ENCODE measurements at regions of chr17 and their contacts with region 1.

Region 1: GRCh38 chr17:42459256-42459800 is 650 bp downstream of the ATP6V0A1 start:
- DNase-seq: peak; percentile 56 to 85 (median 60)
- ATAC-seq: peak; percentile 74
- H3K4me3 ChIP-seq: peak overlapping the region; percentile 76
- H3K27ac ChIP-seq: peak overlapping the region; percentile 77
- H3K4me1 ChIP-seq: peaks cover 22 to 26% of the 10 kb centered on the region in 2 experiments
- H3K27me3 ChIP-seq: no peaks in the 10 kb centered on the region
- CTCF ChIP-seq: peak; percentile 61 to 69 (median 65)
- EP300 ChIP-seq: no peak; the same call in 1 of the 2 replicates
- POLR2A ChIP-seq: no peak
- RAD21 ChIP-seq: peak in 1 of 2 experiments; percentile 30; a peak in 1 of 4 replicates

Region 2: GRCh38 chr17:42422958-42423712 is 36.2 kb before region 1 on chr17 and contains the start of gene CAVIN1:
- CTCF ChIA-PET with region 1: no interaction called
- POLR2A ChIA-PET with region 1: interaction called, 3 read pairs
- in situ Hi-C with region 1: no loop called
- intact Hi-C with region 1: loop called (anchors 2 kb)
- DNase-seq: peak; percentile 93 to 99 (median 98)
- ATAC-seq: peak; percentile 88
- H3K4me3 ChIP-seq: peak within 1 kb of the TSS; percentile 64
- H3K27ac ChIP-seq: peak within 1 kb of the TSS; percentile 71
- H3K4me1 ChIP-seq: peaks cover 21 to 33% of the 10 kb centered on the region in 2 experiments; a peak in 4 of 5 replicates
- H3K27me3 ChIP-seq: no peaks in the 10 kb centered on the region
- CTCF ChIP-seq: no peak
- EP300 ChIP-seq: no peak
- POLR2A ChIP-seq: peak; percentile 88
- RAD21 ChIP-seq: no peak
- polyA plus RNA-seq, gene CAVIN1: 6.8 to 8.6 TPM

Region 3: DNA sequence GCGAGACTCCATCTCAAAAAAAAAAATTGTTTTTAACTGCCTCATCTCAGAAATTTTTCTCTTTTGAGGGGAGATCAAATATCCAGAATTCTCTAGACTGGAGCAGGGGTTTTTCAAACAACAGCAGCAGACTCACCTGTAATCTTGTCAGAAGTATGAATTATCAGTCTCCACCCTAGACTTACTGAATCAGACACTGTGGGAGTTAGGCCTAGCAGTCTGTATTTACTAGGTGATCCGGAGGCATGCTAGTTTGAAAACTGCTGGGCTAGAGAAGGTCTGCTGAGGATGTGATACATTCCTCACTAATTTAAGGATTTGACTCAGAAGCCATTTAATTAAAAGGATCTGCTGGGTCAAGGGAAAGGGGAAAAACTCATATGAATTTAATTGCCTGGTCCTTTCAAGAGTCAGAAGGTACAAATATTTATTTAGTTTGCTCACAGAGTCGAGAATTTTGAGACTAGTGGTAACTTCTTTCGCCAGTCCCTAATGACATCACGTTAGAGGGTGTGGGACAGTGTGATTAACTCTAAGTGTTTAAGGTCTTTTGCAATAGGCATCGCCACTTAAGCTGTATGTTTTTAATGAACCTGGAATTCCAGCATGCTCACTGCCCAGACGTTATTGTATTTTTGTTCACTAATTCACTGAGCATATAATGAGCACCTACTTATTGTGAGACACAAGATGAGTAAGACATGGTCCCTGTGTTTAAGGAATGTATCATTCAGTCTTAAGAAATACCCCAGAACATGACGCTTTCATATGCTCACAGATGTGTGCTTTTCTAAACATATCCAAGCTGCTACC is 13.6 kb after region 1 on chr17:
- CTCF ChIA-PET with region 1: no interaction called
- POLR2A ChIA-PET with region 1: interaction called, 10 read pairs
- in situ Hi-C with region 1: no loop called
- intact Hi-C with region 1: no loop called
- DNase-seq: peak in 1 of 4 experiments; percentile 1
- ATAC-seq: no peak
- H3K4me3 ChIP-seq: no peak overlapping the region
- H3K27ac ChIP-seq: no peak overlapping the region
- H3K4me1 ChIP-seq: no peaks in the 10 kb centered on the region
- H3K27me3 ChIP-seq: no peaks in the 10 kb centered on the region
- CTCF ChIP-seq: no peak
- EP300 ChIP-seq: no peak
- POLR2A ChIP-seq: no peak
- RAD21 ChIP-seq: no peak

Measured in K562 (cell line).